ENCODE measurements at regions of chr7 and their contacts with region 1.

Region 1: GRCh38 chr7:75531359-75531821 is 39.3 kb downstream of the SPDYE5 start:
- DNase-seq: no peak
- ATAC-seq: no peak
- H3K4me3 ChIP-seq: no peak overlapping the region
- H3K4me3 Mint-ChIP-seq: no peak overlapping the region
- H3K27ac ChIP-seq: no peak overlapping the region
- H3K27ac Mint-ChIP-seq: no peak overlapping the region
- H3K4me1 ChIP-seq: peaks cover 12 to 14% of the 10 kb centered on the region in 2 donors
- H3K4me1 Mint-ChIP-seq: peaks cover 23% of the 10 kb centered on the region
- H3K27me3 ChIP-seq: no peaks in the 10 kb centered on the region
- H3K27me3 Mint-ChIP-seq: no peaks in the 10 kb centered on the region
- CTCF ChIP-seq: no peak

Region 2: DNA sequence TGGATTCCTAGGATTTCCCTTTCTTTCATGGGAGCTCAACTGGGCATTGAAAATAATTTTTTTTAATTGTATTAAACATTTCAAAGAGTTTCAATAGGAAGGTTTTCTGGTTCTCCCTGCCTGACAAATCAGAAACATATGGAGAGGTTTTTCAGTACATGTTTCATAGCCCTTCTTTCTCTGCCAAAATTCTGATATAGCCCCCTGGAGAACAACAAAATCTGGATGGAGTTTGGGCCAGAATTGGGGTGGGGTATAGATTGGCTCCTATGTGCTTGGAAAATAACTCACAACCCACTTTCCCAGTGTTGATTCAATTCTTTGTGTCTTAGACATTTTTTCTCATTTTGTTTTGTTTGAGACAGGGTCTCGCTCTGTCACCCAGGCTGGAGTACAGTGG is 1381.8 kb before region 1 on chr7:
- CTCF ChIA-PET with region 1: no interaction called
- POLR2A ChIA-PET with region 1: no interaction called
- intact Hi-C with region 1: no loop called
- DNase-seq: no peak
- ATAC-seq: no peak
- H3K4me3 ChIP-seq: no peak overlapping the region
- H3K4me3 Mint-ChIP-seq: no peak overlapping the region
- H3K27ac ChIP-seq: no peak overlapping the region
- H3K27ac Mint-ChIP-seq: no peak overlapping the region
- H3K4me1 ChIP-seq: no peaks in the 10 kb centered on the region
- H3K4me1 Mint-ChIP-seq: peaks cover 3% of the 10 kb centered on the region
- H3K27me3 ChIP-seq: no peaks in the 10 kb centered on the region
- H3K27me3 Mint-ChIP-seq: peaks cover 4% of the 10 kb centered on the region
- CTCF ChIP-seq: no peak

Region 3: DNA sequence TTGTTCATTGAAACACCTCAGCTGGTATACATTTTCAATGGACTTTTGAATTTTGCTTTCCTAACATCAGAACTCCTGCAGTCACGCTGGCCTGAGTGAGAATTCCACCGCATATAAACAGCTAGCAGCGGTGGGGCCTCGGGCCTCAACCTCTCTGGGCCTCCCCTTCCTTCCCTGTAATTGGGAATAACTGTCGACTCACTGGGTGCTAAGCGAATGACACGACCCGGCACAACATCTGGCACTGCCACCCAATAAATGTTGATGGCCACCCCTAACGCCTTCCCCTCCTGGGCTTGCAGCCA is 458.5 kb before region 1 on chr7:
- CTCF ChIA-PET with region 1: no interaction called
- POLR2A ChIA-PET with region 1: no interaction called
- intact Hi-C with region 1: loop called (anchors 10 kb)
- DNase-seq: no peak
- ATAC-seq: no peak
- H3K4me3 ChIP-seq: peak overlapping the region; percentile 21 to 79 (median 70)
- H3K4me3 Mint-ChIP-seq: peak overlapping the region; percentile 98
- H3K27ac ChIP-seq: peak overlapping the region; percentile 43 to 90
- H3K27ac Mint-ChIP-seq: peak overlapping the region; percentile 89
- H3K4me1 ChIP-seq: peaks cover 5 to 12% of the 10 kb centered on the region in 2 donors
- H3K4me1 Mint-ChIP-seq: peaks cover 12% of the 10 kb centered on the region
- H3K27me3 ChIP-seq: no peaks in the 10 kb centered on the region
- H3K27me3 Mint-ChIP-seq: no peaks in the 10 kb centered on the region
- CTCF ChIP-seq: no peak

Region 4: DNA sequence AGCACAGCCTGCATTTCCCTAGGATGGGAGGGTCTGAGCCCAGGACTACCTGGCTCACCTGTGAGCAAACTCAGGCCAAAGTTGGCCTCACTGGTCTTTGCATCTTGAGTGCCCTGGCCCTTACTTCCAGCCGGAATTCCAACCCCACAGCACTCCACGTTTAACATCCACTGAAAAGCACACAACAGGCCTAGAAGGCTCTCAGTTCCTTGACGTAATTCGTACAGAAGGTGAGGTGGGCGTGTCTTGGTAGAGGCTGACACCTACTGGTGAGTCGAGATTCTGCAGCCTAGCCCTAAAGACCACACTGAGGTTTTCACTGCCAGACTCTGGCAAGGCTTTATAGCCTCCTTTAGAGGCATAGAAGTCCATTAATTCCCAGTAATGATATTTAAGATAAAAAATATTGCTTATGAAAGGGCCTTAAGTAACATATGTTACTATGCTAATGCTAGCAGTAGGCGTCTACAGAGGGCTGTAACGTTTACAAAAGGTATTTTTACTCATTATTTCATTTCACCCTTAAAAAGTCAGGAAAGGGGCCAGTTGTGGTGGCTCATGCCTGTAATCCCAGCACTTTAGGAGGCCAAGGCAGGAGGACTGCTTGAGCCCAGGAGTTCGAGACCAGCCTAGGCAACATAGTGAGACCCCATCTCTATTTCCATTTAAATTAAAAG is 111.6 kb after region 1 on chr7:
- CTCF ChIA-PET with region 1: interaction called, 4 read pairs
- POLR2A ChIA-PET with region 1: no interaction called
- intact Hi-C with region 1: loop called (anchors 1 kb)
- DNase-seq: peak; percentile 81
- ATAC-seq: peak; percentile 82
- H3K4me3 ChIP-seq: no peak overlapping the region
- H3K4me3 Mint-ChIP-seq: peak overlapping the region; percentile 13
- H3K27ac ChIP-seq: no peak overlapping the region
- H3K27ac Mint-ChIP-seq: no peak overlapping the region
- H3K4me1 ChIP-seq: peaks cover 11 to 14% of the 10 kb centered on the region in 2 donors
- H3K4me1 Mint-ChIP-seq: peaks cover 14% of the 10 kb centered on the region
- H3K27me3 ChIP-seq: peaks cover 0 to 12% (median 4%) of the 10 kb centered on the region in 4 experiments
- H3K27me3 Mint-ChIP-seq: no peaks in the 10 kb centered on the region
- CTCF ChIP-seq: peak; percentile 86

Measured in B cell (primary cell).